Activated CD4-positive, alpha-beta memory T cell treated with anti-CD3 and anti-CD28 coated beads for 36 hours (primary cell): ENCODE measurements at regions of chr9 and their contacts with region 1.

Region 1: GRCh38 chr9:124852829-124853531 is at the start of gene WDR38:
- DNase-seq: peak; percentile 84
- H3K4me3 Mint-ChIP-seq: peak within 1 kb of the TSS; percentile 70
- H3K27ac Mint-ChIP-seq: no peak within 1 kb of the TSS
- H3K4me1 Mint-ChIP-seq: peaks cover 16% of the 10 kb centered on the region
- H3K27me3 Mint-ChIP-seq: peaks cover 4% of the 10 kb centered on the region
- total RNA-seq, gene WDR38: not detected

Region 2: DNA sequence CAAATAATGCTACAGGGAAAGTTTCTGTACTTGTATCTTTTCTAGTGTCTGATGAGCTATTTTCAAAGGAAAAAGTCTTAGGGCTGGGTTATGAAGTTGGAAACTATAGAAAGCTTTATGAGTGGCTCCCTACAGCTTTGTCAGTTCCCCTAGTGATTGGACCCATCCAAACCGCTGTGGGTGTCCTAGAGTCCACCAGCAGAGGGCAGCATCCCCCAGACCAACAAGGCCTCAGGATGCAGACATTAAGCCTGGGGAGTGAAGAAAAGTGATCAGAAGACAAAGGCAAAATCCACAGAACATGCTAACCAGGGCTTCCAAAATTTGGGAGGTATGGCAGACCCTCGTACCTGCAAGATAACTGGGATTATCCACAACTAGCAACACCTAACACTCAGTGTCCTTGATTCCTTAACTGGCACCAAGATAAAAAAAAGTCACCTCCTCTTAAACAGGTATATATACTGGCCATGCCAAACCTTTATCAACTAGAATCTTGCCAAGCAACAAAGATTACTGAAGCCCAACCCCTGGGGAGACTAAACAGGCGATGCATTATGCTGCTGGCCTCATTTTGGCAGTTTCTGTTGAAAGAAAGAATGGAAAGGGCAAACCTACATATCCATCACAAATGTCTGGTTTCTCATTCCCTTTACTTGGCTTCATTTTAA is 235.4 kb before region 1 on chr9:
- CTCF ChIA-PET with region 1: interaction called, 18 read pairs
- POLR2A ChIA-PET with region 1: no interaction called
- intact Hi-C with region 1: no loop called
- DNase-seq: peak; percentile 82
- H3K4me3 Mint-ChIP-seq: no peak overlapping the region
- H3K27ac Mint-ChIP-seq: no peak overlapping the region
- H3K4me1 Mint-ChIP-seq: no peaks in the 10 kb centered on the region
- H3K27me3 Mint-ChIP-seq: peaks cover 4% of the 10 kb centered on the region

Region 3: DNA sequence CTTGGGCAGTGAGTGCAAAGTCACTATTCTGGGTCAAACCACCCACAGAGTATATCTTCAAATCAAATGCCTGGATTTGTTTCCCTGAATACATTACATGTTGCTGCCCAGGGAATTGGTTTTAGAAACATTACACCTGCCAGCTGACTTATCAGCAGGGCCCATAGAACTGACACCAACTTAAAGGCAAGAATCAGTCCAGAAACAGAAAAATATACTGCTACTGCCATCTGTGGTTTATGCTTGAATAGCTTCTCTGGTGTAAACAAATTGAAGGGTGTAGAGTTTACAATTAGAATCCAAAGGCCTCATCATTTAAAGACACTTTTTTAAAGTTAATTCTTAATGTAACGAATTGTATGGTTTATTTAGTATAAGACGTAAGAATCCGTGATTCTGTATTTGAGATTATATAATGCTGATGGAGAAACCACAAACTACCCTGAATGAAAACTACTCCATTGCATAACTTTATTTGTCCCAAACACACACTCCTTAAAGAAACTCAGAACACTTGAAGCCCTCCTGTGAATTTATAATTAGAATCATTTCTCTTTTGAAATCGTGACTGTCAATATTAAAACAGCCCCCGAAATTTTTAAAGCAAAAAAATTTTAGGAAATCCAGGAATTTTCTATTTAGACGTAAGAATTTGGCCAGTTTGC is 88.1 kb before region 1 on chr9:
- CTCF ChIA-PET with region 1: interaction called, 530 read pairs
- POLR2A ChIA-PET with region 1: interaction called, 18 read pairs
- intact Hi-C with region 1: no loop called
- DNase-seq: no peak
- H3K4me3 Mint-ChIP-seq: no peak overlapping the region
- H3K27ac Mint-ChIP-seq: no peak overlapping the region
- H3K4me1 Mint-ChIP-seq: peaks cover 11% of the 10 kb centered on the region
- H3K27me3 Mint-ChIP-seq: peaks cover 69% of the 10 kb centered on the region

Region 4: GRCh38 chr9:124839612-124840299 is 13.2 kb before region 1 on chr9:
- CTCF ChIA-PET with region 1: interaction called, 52 read pairs
- POLR2A ChIA-PET with region 1: no interaction called
- intact Hi-C with region 1: no loop called
- DNase-seq: no peak
- H3K4me3 Mint-ChIP-seq: no peak overlapping the region
- H3K27ac Mint-ChIP-seq: no peak overlapping the region
- H3K4me1 Mint-ChIP-seq: no peaks in the 10 kb centered on the region
- H3K27me3 Mint-ChIP-seq: peaks cover 17% of the 10 kb centered on the region

Region 5: GRCh38 chr9:125143375-125144090 is 290.6 kb after region 1 on chr9 and contains the start of gene SCAI:
- CTCF ChIA-PET with region 1: interaction called, 16 read pairs
- POLR2A ChIA-PET with region 1: no interaction called
- intact Hi-C with region 1: no loop called
- DNase-seq: peak; percentile 99
- H3K4me3 Mint-ChIP-seq: peak within 1 kb of the TSS; percentile 82
- H3K27ac Mint-ChIP-seq: peak within 1 kb of the TSS; percentile 24
- H3K4me1 Mint-ChIP-seq: peaks cover 31% of the 10 kb centered on the region
- H3K27me3 Mint-ChIP-seq: no peaks in the 10 kb centered on the region
- total RNA-seq, gene SCAI: 9.0 to 10.8 TPM